Activated CD4-positive, alpha-beta T cell treated with anti-CD3 and anti-CD28 coated beads, Interleukin-2, amount 10 ng/mL, durations not matched to agents 24 days and 14 days (primary cell): ENCODE measurements at regions of chr1 and their contacts with region 1.

Region 1: GRCh38 chr1:151198255-151199127 is at the start of gene PIP5K1A:
- DNase-seq: peak; percentile 99
- H3K4me3 Mint-ChIP-seq: peak within 1 kb of the TSS; percentile 94
- H3K27ac Mint-ChIP-seq: peak within 1 kb of the TSS; percentile 97
- H3K4me1 Mint-ChIP-seq: peaks cover 35% of the 10 kb centered on the region
- H3K27me3 Mint-ChIP-seq: peaks cover 5% of the 10 kb centered on the region
- total RNA-seq, gene PIP5K1A: 97.7 and 98.7 TPM in 2 replicates

Region 2: GRCh38 chr1:151072224-151072623 is 126.3 kb before region 1 on chr1:
- intact Hi-C with region 1: no loop called
- DNase-seq: no peak
- H3K4me3 Mint-ChIP-seq: peak overlapping the region; percentile 91
- H3K27ac Mint-ChIP-seq: no peak overlapping the region
- H3K4me1 Mint-ChIP-seq: peaks cover 17% of the 10 kb centered on the region
- H3K27me3 Mint-ChIP-seq: no peaks in the 10 kb centered on the region

Region 3: DNA sequence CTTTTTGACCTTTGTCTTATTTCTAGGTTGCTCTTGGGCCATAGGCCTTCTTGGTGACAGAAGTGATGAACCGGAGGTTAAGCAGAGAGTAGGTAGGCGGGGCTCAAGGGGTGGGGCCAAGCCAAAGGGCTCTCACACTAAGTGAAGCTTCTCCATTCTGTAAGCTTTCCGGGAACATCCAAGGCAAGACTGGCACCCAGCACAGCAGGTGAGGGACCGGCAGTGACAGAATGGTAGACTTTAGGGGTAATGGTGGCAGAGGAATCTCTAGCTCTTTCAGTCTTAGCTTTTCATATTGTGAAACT is 42.0 kb before region 1 on chr1 and contains the start of gene TNFAIP8L2:
- intact Hi-C with region 1: loop called (anchors 2 kb)
- DNase-seq: peak; percentile 94
- H3K4me3 Mint-ChIP-seq: peak within 1 kb of the TSS; percentile 97
- H3K27ac Mint-ChIP-seq: peak within 1 kb of the TSS; percentile 96
- H3K4me1 Mint-ChIP-seq: peaks cover 42% of the 10 kb centered on the region
- H3K27me3 Mint-ChIP-seq: no peaks in the 10 kb centered on the region
- total RNA-seq, gene TNFAIP8L2: 29.4 and 32.5 TPM in 2 replicates

Region 4: GRCh38 chr1:151165738-151166505 is 32.6 kb before region 1 on chr1 and contains the starts of genes LYSMD1 and SCNM1:
- intact Hi-C with region 1: loop called (anchors 1 kb)
- DNase-seq: peak; percentile 99
- H3K4me3 Mint-ChIP-seq: peak within 1 kb of the TSS; percentile 97
- H3K27ac Mint-ChIP-seq: peak within 1 kb of the TSS; percentile 91
- H3K4me1 Mint-ChIP-seq: peaks cover 41% of the 10 kb centered on the region
- H3K27me3 Mint-ChIP-seq: no peaks in the 10 kb centered on the region
- total RNA-seq, gene LYSMD1: 4.7 and 5.2 TPM in 2 replicates
- total RNA-seq, gene SCNM1: 96.7 and 100 TPM in 2 replicates

Region 5: GRCh38 chr1:151211972-151212705 is 13.6 kb after region 1 on chr1:
- intact Hi-C with region 1: loop called (anchors 2 kb)
- DNase-seq: peak; percentile 71
- H3K4me3 Mint-ChIP-seq: peak overlapping the region; percentile 71
- H3K27ac Mint-ChIP-seq: peak overlapping the region; percentile 89
- H3K4me1 Mint-ChIP-seq: peaks cover 33% of the 10 kb centered on the region
- H3K27me3 Mint-ChIP-seq: no peaks in the 10 kb centered on the region

Region 6: GRCh38 chr1:151238467-151238739 is 39.9 kb after region 1 on chr1:
- intact Hi-C with region 1: no loop called
- DNase-seq: no peak
- H3K4me3 Mint-ChIP-seq: no peak overlapping the region
- H3K27ac Mint-ChIP-seq: no peak overlapping the region
- H3K4me1 Mint-ChIP-seq: peaks cover 5% of the 10 kb centered on the region
- H3K27me3 Mint-ChIP-seq: no peaks in the 10 kb centered on the region

Region 7: GRCh38 chr1:151254217-151255213 is 56.0 kb after region 1 on chr1 and contains the start of gene PSMD4:
- intact Hi-C with region 1: loop called (anchors 1 kb)
- DNase-seq: peak; percentile 98
- H3K4me3 Mint-ChIP-seq: peak within 1 kb of the TSS; percentile 90
- H3K27ac Mint-ChIP-seq: peak within 1 kb of the TSS; percentile 94
- H3K4me1 Mint-ChIP-seq: peaks cover 25% of the 10 kb centered on the region
- H3K27me3 Mint-ChIP-seq: no peaks in the 10 kb centered on the region
- total RNA-seq, gene PSMD4: 288 and 304 TPM in 2 replicates

Region 8: GRCh38 chr1:151327223-151327902 is 128.9 kb after region 1 on chr1 and contains the start of gene PI4KB:
- intact Hi-C with region 1: loop called (anchors 5 kb)
- DNase-seq: peak; percentile 97
- H3K4me3 Mint-ChIP-seq: peak within 1 kb of the TSS; percentile 95
- H3K27ac Mint-ChIP-seq: peak within 1 kb of the TSS; percentile 97
- H3K4me1 Mint-ChIP-seq: peaks cover 28% of the 10 kb centered on the region
- H3K27me3 Mint-ChIP-seq: no peaks in the 10 kb centered on the region
- total RNA-seq, gene PI4KB: 57.1 and 59.2 TPM in 2 replicates

Region 9: DNA sequence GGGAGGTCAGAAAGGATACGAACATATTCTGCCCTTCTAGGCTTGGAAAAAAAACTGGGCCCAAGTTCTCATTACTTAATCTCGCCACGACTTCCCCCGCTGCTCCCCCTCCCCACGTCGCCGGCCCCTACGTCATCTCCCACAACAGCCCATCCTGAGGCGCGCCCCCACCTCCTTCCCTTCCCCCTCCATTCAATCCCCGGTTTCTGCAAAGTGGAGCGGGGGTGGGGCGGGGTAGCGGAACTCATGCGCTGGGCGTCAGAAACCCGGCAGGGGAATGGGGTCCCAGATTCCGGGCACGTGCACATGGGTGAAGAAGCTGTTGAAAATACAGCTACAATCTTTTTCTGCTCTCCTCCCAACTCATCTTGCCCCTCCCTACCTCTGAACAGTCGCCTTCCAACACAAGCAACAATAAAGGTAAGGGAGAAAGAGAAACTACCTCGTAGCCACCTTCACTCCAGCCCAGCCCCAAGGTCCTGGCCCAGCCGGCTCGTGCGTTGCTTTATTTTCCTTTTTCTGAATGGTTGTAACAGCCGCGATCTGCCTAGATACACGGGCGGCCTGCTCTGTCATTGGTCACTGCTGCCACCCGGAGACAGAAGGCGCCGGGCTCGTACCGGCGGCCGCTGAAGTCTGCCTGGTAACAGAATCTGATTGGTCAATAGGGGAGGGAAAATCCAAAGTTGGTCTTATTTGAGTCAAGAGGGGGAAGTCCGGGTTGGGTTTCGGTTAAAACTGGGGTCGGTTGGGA is 148.5 kb after region 1 on chr1 and contains the start of gene RFX5:
- intact Hi-C with region 1: loop called (anchors 2 kb)
- DNase-seq: peak; percentile 98
- H3K4me3 Mint-ChIP-seq: peak within 1 kb of the TSS; percentile 95
- H3K27ac Mint-ChIP-seq: peak within 1 kb of the TSS; percentile 98
- H3K4me1 Mint-ChIP-seq: peaks cover 38% of the 10 kb centered on the region
- H3K27me3 Mint-ChIP-seq: no peaks in the 10 kb centered on the region
- total RNA-seq, gene RFX5: 69.2 and 73.1 TPM in 2 replicates